Right ventricle myocardium inferior (tissue), 1 donor: ENCODE measurements at regions of chr6 and their contacts with region 1.

Region 1: DNA sequence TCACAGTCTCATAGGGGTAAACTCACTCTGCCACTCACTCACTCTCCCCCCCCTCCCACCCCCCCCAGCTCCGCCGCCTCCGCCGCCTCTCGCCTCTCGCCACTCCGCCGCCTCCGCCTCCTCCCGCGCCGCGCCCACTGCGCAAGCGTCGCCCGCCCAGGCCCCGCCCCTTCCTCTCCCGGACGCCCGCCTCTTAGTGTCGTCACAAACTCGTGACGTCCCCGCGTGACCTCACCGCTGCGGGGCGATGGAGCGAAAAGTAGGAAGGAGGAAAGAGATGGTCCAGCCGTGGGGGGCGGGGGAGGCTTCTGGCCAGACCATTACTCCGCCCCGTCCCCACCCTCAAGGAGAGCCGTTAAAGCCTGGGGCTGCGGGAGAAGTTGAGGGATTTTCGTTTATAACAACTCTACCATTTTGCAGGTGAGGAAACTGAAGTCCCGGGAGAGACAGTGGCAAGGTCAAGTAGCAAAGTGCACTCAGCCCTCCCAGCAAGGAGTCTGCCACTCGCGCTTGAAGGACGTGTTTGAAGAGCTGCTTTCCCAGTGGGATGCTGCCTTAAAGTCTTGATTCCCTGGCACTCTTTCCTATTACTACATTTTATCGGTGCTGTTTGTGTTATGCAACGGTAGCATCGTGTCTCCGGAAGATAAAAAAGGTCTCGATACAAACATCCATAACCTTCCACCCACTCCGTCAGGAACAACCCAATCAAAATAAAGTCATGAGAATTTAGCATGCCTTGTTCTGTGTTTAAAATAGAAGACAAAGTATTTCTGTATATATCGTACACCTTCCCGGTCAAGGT is at the start of gene ILRUN:
- DNase-seq: peak; percentile 99
- ATAC-seq: peak; percentile 95
- total RNA-seq, gene ILRUN: 143 TPM

Region 2: DNA sequence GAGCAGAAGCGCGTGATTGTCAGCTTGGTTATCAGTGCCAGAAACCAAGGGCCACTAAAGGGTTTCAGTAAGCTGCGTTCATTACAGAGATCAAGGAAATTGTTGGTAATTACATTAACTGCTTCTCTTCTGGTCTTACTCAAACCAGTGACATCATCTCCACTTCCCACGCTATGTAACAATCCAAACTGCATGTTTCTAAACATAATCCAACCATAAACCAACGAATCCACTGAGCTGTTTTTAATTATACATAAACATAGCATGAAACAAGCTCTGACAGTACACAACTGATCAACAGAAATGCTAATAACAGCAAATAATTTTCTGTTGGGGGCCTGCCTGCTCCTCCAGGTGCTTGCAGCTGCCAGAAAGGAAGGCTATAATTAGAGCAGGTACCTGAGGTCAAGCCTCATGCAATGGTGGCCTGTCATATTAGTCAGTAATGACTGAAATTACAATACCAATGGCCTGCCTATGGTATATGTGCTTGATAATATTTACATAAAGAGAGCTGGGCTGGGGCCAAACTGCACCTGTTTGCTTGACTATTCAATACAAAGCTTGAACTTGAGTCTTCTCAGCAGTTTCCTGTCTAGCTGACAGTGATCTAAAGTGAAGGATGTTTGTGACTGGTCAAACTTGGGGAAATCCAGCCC is 40.4 kb before region 1 on chr6:
- intact Hi-C with region 1: loop called (anchors 2 kb)
- DNase-seq: no peak
- ATAC-seq: peak; percentile 45